AG04449 (cell line): ENCODE measurements at regions of chr9 and their contacts with region 1.

Region 1: GRCh38 chr9:98248737-98249474 is 6.5 kb downstream of the TBC1D2 start:
- DNase-seq: peak; percentile 93
- H3K4me3 ChIP-seq: no peak overlapping the region
- CTCF ChIP-seq: no peak

Region 2: GRCh38 chr9:98234245-98234825 is 14.6 kb before region 1 on chr9:
- CTCF ChIA-PET with region 1: interaction called, 17 read pairs
- POLR2A ChIA-PET with region 1: no interaction called
- DNase-seq: no peak
- H3K4me3 ChIP-seq: no peak overlapping the region
- CTCF ChIP-seq: no peak